GM12878 (cell line): ENCODE measurements at regions of chr3 and their contacts with region 1.

Region 1: DNA sequence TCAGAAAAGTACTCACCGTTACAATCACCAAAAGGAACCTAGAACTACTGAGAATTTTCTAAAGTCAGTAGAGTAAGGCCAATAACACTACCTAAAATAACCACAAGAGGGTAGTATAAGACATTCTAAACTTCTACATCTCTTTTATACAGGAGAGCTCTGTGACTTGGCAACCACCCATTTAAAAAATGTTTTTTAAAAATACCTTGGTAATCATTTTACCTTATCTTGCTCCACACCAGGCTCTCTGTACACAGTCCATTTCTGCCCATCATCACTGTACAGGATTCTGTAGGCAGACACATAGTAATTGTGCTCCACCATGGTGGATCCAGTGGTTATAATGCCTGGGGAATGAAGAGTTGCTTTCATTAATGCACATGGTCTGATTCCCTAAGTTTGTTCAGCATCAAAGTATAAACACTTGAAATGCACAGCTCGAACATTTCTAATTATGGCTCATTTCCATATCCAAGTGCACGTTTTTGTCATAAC is 54.5 kb downstream of the ST3GAL6 start:
- DNase-seq: no peak
- ATAC-seq: peak; percentile 96
- H3K4me3 ChIP-seq: no peak overlapping the region
- H3K27ac ChIP-seq: no peak overlapping the region
- H3K4me1 ChIP-seq: no peaks in the 10 kb centered on the region
- H3K27me3 ChIP-seq: no peaks in the 10 kb centered on the region
- CTCF ChIP-seq: peak; percentile 47 to 64 (median 61); a peak in 5 of 6 replicates
- EP300 ChIP-seq: no peak
- POLR2A ChIP-seq: no peak
- RAD21 ChIP-seq: peak; percentile 73

Region 2: DNA sequence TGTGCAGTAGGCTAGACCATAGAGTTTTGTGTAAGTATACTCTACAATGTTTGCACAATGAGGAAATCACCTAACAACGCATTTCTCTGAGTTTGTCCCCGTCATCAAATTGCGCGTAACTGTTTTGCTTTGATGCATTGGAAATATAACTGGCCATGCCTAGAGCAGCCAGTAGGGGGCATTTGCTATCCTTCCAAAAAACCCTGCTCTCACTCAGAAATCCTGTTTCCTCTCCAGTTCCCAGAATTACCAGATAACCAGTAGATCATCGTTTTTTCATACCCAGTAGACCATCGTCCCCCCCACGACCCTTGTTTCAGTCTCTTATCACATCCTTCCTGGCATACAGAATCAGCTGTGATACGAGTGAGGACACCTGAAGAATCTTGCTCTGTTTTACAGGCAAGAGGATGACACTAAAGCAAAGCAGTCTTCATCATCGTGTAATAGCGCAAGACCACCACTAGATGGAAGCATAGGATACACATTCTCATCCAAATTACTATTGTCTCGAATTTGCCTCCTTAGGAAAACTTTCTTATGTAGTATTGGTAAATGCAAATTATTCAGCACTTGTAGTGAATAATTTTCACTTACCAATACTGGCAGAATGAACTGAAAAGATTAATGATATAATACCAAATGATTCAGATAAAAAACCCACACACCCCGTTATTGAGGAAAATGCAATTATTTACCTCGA is 778.1 kb before region 1 on chr3:
- CTCF ChIA-PET with region 1: interaction called, 12 read pairs
- POLR2A ChIA-PET with region 1: no interaction called
- RAD21 ChIA-PET with region 1: no interaction called
- SMC1A ChIA-PET with region 1: no interaction called
- in situ Hi-C with region 1: loop called (anchors 5 kb)
- intact Hi-C with region 1: loop called (anchors 2 kb)
- DNase-seq: peak; percentile 79
- ATAC-seq: peak; percentile 97
- H3K4me3 ChIP-seq: peak overlapping the region; percentile 66; the same call in 1 of the 2 replicates
- H3K27ac ChIP-seq: no peak overlapping the region
- H3K4me1 ChIP-seq: no peaks in the 10 kb centered on the region
- H3K27me3 ChIP-seq: no peaks in the 10 kb centered on the region; a peak in 1 of 4 replicates
- CTCF ChIP-seq: peak; percentile 61 to 95 (median 67)
- EP300 ChIP-seq: no peak
- POLR2A ChIP-seq: no peak
- RAD21 ChIP-seq: peak; percentile 86

Region 3: DNA sequence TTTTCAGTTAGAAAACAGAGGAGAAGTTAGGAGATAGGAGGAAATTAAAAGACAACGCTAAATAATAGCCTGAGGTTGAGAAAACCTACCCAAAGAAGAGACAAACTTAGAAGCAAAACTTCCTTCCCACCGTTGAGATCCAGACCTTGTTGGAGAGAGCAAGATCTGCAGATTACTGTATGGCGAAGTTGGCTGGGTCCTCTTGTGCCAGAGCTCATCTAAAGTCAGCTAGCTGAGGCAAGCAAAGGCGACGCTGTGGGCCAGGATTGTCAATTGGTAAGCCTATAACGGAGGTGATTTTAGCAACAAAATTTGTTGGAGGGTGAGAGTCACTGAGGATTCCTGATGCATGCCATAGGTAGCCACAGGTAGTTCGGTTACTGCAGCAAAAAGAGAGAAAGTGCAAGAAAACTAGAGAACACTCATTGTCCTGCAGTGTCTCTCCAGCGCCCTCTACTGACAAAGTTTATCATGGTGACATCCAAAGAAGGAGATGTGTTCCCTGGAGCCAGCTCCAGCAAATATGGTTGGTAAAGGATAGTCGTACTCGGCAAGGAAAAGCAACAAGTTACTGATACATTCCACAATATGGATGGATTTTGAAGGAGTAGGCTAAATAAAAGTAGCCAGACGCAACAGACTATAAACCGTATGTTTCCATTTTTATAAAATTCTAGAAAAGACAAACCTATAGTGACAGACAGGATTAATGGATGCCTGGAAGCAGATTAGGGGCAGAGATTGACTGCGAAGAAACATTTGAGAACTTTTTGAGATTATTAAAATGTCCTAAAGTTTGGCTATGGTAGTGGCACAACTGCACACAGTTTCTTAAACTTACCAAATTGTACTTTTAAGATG is 473.7 kb before region 1 on chr3:
- CTCF ChIA-PET with region 1: interaction called, 5 read pairs
- POLR2A ChIA-PET with region 1: no interaction called
- RAD21 ChIA-PET with region 1: no interaction called
- SMC1A ChIA-PET with region 1: no interaction called
- in situ Hi-C with region 1: loop called (anchors 25 kb)
- intact Hi-C with region 1: loop called (anchors 10 kb)
- DNase-seq: no peak
- ATAC-seq: peak; percentile 92
- H3K4me3 ChIP-seq: no peak overlapping the region
- H3K27ac ChIP-seq: no peak overlapping the region
- H3K4me1 ChIP-seq: no peaks in the 10 kb centered on the region
- H3K27me3 ChIP-seq: no peaks in the 10 kb centered on the region
- CTCF ChIP-seq: peak; percentile 70 to 84 (median 80)
- EP300 ChIP-seq: no peak
- POLR2A ChIP-seq: no peak
- RAD21 ChIP-seq: peak; percentile 67

Region 4: GRCh38 chr3:98612587-98612986 is 205.0 kb before region 1 on chr3:
- CTCF ChIA-PET with region 1: interaction called, 373 read pairs
- POLR2A ChIA-PET with region 1: no interaction called
- RAD21 ChIA-PET with region 1: interaction called, 4 read pairs
- SMC1A ChIA-PET with region 1: interaction called, 10 read pairs
- in situ Hi-C with region 1: no loop called
- intact Hi-C with region 1: no loop called
- DNase-seq: no peak
- ATAC-seq: peak; percentile 83
- H3K4me3 ChIP-seq: no peak overlapping the region
- H3K27ac ChIP-seq: peak overlapping the region; percentile 80
- H3K4me1 ChIP-seq: peaks cover 7% of the 10 kb centered on the region; the same call in 1 of the 2 replicates
- H3K27me3 ChIP-seq: no peaks in the 10 kb centered on the region
- CTCF ChIP-seq: peak; percentile 16 to 42 (median 39); a peak in 3 of 6 replicates
- EP300 ChIP-seq: no peak
- POLR2A ChIP-seq: no peak
- RAD21 ChIP-seq: peak; percentile 54; the same call in 1 of the 2 replicates

Region 5: DNA sequence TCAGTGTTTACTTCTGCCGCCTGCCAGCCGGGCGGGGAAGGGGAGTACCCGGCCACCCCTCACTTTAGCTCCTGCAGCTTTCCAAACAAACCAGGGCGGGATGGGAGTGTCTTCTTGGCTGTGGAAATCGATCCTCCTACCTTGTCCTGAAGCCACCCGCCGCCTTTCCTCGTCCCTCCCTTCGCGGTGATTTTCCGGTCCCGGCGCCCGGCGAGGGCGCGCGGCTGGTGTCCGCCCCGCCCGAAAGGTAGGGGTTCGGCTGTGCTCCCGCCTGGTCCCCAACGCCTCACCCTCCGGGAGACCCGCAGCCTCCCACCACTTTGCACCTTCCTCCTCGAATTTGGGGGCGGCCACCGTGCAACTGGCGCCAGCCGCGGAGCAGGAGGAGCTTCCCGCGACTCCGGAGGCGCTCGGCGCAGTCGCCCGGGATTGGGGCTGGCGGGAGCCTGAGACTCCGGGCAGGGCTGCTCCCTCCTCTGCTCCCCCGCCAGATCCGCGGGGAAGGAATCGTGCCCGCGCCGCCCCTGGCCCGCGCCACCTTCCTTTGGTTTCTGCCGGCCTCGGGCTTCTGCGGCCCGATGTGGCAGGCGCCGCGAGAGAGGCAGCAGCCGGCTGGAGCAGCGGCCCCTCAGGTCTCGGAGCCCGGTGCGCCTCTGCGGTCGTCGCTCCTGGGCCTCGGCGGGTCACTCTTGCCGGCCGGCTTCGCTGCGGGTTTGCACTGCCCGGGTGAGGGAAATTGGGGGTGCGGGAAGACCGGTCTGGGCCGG is 85.1 kb before region 1 on chr3:
- CTCF ChIA-PET with region 1: interaction called, 3 read pairs
- POLR2A ChIA-PET with region 1: no interaction called
- RAD21 ChIA-PET with region 1: interaction called, 4 read pairs
- SMC1A ChIA-PET with region 1: interaction called, 10 read pairs
- in situ Hi-C with region 1: no loop called
- intact Hi-C with region 1: no loop called
- DNase-seq: no peak
- ATAC-seq: peak; percentile 52
- H3K4me3 ChIP-seq: peak overlapping the region; percentile 80
- H3K27ac ChIP-seq: peak overlapping the region; percentile 60
- H3K4me1 ChIP-seq: no peaks in the 10 kb centered on the region
- H3K27me3 ChIP-seq: no peaks in the 10 kb centered on the region
- CTCF ChIP-seq: no peak
- EP300 ChIP-seq: no peak
- POLR2A ChIP-seq: peak; percentile 81
- RAD21 ChIP-seq: no peak

Region 6: DNA sequence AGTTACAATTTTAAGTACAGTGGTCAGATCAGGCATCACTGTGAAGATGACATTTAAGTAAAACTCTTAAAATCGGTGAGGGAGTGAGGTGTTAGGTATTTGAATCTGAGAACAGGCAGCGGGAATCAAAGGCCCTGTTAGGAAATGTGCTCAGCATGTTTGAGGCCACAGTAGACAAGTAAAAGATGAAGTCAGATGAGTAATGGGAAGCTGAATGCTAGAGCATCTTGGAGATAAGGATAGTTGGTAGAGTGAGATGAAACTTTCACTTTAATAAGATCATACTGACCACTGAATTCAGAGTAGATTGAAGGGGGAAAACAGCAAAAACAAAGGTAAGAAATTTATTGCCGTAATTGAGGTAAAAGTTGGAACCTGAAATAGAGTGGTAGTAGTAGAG is 22.3 kb after region 1 on chr3:
- CTCF ChIA-PET with region 1: no interaction called
- POLR2A ChIA-PET with region 1: no interaction called
- RAD21 ChIA-PET with region 1: no interaction called
- SMC1A ChIA-PET with region 1: no interaction called
- in situ Hi-C with region 1: no loop called
- intact Hi-C with region 1: no loop called
- DNase-seq: no peak
- ATAC-seq: no peak
- H3K4me3 ChIP-seq: no peak overlapping the region
- H3K27ac ChIP-seq: no peak overlapping the region
- H3K4me1 ChIP-seq: no peaks in the 10 kb centered on the region
- H3K27me3 ChIP-seq: no peaks in the 10 kb centered on the region
- CTCF ChIP-seq: no peak
- EP300 ChIP-seq: no peak
- POLR2A ChIP-seq: no peak
- RAD21 ChIP-seq: no peak

Region 7: DNA sequence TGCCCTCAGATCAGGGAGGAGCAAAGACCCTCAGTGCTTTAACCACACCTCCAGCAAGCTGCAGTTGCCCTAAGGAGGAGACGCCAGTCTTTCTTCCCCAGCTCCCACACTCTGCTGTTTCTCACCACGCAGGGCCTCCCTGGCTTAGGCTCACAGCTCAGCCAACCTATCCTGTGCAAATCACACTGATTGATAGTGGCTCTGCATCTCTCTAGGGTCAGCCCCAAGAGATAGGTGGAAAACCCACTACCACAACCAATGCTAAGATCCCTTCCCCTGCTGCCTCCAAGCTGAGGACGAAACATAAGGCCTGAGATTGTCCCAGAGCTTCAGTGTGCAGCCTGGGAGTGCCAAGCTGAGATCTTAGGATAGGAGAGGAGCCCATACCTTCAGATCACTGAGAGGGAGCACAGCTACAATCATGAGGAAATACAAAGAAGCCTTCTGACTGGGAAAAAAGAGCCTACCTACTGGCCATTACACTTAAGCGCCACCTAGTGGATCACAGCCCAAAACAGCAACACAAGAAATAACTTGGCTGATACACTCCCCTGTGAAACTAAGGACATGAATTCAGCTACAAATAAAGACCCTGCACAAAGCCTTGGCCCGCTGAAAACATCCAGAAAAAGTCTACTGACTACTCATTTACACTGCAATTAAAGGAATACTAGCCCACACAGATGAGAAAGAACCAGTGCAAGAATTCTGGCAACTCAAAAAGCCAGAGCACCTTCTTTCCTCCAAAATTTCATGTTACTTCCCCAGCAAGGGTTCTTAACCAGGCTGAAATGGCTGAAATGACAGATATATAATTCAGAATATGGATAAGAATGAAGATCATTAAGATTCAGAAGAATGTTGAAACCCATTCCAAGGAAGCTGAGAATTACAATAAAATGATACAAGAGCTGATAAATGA is 355.4 kb after region 1 on chr3:
- CTCF ChIA-PET with region 1: interaction called, 67 read pairs
- POLR2A ChIA-PET with region 1: no interaction called
- RAD21 ChIA-PET with region 1: interaction called, 13 read pairs
- SMC1A ChIA-PET with region 1: interaction called, 18 read pairs
- in situ Hi-C with region 1: loop called (anchors 5 kb)
- intact Hi-C with region 1: loop called (anchors 1 kb)
- DNase-seq: peak; percentile 9
- ATAC-seq: peak; percentile 88
- H3K4me3 ChIP-seq: no peak overlapping the region
- H3K27ac ChIP-seq: no peak overlapping the region
- H3K4me1 ChIP-seq: no peaks in the 10 kb centered on the region
- H3K27me3 ChIP-seq: no peaks in the 10 kb centered on the region
- CTCF ChIP-seq: peak; percentile 65 to 73 (median 68)
- EP300 ChIP-seq: no peak
- POLR2A ChIP-seq: no peak
- RAD21 ChIP-seq: peak; percentile 73

Region 8: DNA sequence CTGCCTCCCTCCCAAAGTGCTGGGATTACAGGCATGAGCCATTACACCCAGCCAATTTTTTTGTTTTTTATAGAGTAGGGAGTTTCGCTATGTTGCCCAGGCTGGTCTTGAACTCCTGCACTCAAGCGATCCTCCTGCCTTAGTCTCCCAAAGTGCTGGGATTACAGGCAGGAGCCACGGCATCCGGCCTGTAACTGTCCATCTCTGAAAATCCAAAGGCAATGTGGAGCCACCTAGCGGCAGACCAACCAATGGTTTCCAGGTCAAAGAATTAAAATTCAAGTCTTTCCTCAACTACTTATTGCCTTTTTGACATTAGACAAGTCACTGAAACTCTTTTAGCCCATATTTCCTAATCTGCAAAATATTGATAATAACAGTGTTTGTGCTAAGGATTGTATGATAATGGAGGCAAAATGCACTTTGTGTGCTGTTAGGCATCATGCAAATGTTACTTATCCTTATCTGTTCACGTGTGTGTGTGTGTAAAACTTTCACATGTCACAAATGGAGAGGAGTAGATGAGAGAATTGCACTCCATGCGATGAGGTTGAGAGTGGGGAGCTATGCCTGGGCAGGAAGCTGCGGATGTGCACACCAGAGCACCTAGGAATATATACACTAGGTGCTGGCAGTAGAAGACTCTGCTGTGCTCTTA is 869.5 kb after region 1 on chr3:
- CTCF ChIA-PET with region 1: interaction called, 11 read pairs
- POLR2A ChIA-PET with region 1: no interaction called
- RAD21 ChIA-PET with region 1: no interaction called
- SMC1A ChIA-PET with region 1: no interaction called
- in situ Hi-C with region 1: no loop called
- intact Hi-C with region 1: loop called (anchors 2 kb)
- DNase-seq: no peak
- ATAC-seq: peak; percentile 85
- H3K4me3 ChIP-seq: no peak overlapping the region
- H3K27ac ChIP-seq: no peak overlapping the region
- H3K4me1 ChIP-seq: no peaks in the 10 kb centered on the region
- H3K27me3 ChIP-seq: no peaks in the 10 kb centered on the region; a peak in 1 of 4 replicates
- CTCF ChIP-seq: peak; percentile 68 to 73 (median 70)
- EP300 ChIP-seq: no peak
- POLR2A ChIP-seq: no peak
- RAD21 ChIP-seq: peak; percentile 84